ENCODE measurements at regions of chr6 and their contacts with region 1.

Region 1: DNA sequence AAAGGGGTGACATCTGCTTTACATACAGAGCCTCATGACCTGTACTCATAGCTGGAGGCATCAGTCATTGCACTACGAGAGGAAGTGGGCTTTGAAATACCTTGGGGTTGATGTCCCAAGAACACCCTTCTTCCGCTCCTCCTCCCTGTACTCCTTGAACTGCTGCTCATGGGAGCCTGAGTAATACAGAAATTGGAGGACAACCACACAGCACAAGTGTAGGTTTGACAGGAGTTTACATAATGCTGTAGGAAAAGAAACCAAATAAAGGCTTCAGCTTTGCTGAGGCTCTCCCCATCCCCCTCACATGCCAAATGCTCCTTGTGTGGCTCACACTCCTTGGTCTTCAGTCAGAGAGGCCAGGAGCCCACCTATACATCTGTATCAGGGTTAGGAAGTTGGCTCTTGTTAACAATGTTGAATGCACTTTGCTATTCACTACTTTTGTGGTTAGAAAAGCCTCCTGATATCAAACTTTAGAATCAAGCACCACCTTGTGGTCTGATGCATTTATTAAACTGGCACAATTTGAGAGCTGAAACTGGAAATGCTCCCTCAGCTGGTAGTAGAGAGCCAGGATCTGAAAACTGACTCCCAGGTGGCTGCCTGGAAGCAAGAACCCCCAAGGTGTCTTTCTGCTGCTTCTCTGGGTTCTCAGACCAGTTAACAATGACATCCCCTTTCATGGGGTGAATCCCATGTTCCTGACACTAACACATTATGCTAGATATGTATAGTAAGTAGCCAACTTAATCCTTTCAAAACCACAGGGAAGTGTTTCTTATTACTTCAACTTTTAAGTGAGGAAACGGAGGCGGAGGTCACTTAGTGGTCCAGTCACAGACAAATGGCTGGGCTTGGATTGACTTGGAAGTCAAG is 56.2 kb upstream of the EDN1 start:
- DNase-seq: no peak

Region 2: GRCh38 chr6:11585426-11586016 is 648.4 kb before region 1 on chr6:
- intact Hi-C with region 1: loop called (anchors 10 kb)
- DNase-seq: no peak

Region 3: DNA sequence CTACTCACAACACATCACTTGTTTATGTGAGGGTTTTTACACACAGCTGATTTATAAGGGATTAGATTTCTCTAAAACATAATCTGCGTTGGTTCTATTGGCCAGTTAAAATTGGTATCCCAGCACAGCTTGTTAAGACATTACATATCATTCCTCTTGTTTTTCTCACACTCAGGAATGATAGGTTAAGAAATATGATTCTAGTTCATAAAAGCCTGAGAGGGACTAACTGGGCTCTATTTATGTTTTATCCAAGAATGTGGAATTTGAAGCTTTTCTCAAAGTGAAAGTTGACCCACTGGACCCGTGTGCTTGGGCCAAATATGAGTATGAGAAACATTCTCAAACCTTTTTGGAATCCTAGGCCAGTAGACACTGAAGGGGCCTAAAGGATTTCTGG is 579.1 kb before region 1 on chr6:
- intact Hi-C with region 1: loop called (anchors 5 kb)
- DNase-seq: no peak

Region 4: GRCh38 chr6:13194852-13195251 is 960.9 kb after region 1 on chr6:
- intact Hi-C with region 1: no loop called
- DNase-seq: no peak